Activated CD8-positive, alpha-beta T cell treated with anti-CD3 and anti-CD28 coated beads for 36 hours (primary cell): ENCODE measurements at regions of chr10 and their contacts with region 1.

Region 1: DNA sequence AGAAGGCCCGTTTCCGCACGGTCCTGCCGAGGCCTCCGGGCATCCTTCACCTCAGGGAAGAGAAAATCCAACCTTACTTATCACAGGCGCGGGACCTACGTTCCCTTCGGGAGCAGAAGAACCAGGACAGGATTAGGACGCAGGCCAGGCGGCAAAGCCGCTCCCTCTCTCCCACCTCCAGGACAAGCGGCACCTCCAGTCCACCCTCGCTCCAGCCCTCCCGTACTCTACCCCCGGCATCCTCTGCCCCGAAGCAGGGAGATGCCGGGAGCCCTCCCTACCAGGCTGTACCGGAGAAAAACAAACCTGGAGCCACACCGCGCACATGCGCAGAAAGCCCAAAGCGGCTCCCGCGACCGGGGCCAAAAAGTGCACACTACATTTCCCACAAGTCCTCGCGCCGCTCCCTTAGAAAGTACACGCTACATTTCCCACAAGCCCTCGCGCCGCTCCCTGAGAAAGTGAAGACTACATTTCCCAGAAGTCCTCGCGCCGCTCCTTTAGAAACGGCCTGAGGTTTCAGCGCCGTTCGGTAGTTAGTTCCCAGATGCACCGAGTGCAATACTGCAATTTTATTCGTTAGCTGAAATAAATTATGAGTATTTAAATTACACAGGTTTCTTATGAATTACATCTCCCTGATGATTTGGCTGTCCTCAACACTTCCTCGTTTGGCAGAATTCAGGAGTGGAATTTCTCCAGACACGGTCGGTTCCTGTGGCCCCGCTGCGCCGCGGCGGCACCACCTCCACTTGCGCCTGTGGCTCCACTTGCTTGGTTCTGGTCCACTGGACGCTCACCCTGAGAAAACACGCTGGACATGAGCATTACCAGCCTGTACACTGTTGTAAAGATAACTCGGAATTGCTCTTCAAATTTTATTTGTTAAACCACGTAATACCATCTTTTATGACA is 85.6 kb downstream of the ZNF33B start:
- DNase-seq: peak; percentile 98
- ATAC-seq: peak; percentile 96
- H3K4me3 Mint-ChIP-seq: peak overlapping the region; percentile 91
- H3K27ac Mint-ChIP-seq: peak overlapping the region; percentile 94
- H3K4me1 Mint-ChIP-seq: peaks cover 35% of the 10 kb centered on the region
- H3K27me3 Mint-ChIP-seq: no peaks in the 10 kb centered on the region
- CTCF ChIP-seq: no peak

Region 2: DNA sequence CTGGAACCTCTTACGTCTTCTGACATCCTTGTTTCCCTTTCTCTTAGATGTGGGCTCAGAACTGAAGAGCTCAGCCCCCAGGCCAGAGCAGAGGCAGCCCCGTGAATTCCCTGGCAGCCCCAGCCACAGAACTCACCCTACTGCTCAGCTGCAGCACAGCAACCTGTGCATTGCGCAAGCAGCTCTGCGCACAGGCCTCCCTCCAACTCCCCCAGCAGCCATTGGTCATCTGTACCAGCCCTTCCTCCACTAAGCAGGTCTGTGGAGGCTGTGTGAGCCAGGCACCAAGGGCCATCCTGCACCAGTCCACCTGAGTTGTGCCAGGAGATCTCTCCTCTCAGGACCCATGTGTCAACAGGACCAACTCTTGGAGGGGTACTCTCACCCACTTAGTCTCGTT is 31.1 kb after region 1 on chr10:
- CTCF ChIA-PET with region 1: no interaction called
- POLR2A ChIA-PET with region 1: no interaction called
- intact Hi-C with region 1: no loop called
- DNase-seq: no peak
- ATAC-seq: no peak
- H3K4me3 Mint-ChIP-seq: no peak overlapping the region
- H3K27ac Mint-ChIP-seq: no peak overlapping the region
- H3K4me1 Mint-ChIP-seq: no peaks in the 10 kb centered on the region
- H3K27me3 Mint-ChIP-seq: no peaks in the 10 kb centered on the region
- CTCF ChIP-seq: no peak

Region 3: GRCh38 chr10:42638055-42638820 is 85.5 kb after region 1 on chr10 and contains the start of gene ZNF33B:
- CTCF ChIA-PET with region 1: no interaction called
- POLR2A ChIA-PET with region 1: no interaction called
- intact Hi-C with region 1: loop called (anchors 5 kb)
- DNase-seq: peak; percentile 95
- ATAC-seq: peak; percentile 97
- H3K4me3 Mint-ChIP-seq: peak within 1 kb of the TSS; percentile 95
- H3K27ac Mint-ChIP-seq: peak within 1 kb of the TSS; percentile 98
- H3K4me1 Mint-ChIP-seq: peaks cover 23% of the 10 kb centered on the region
- H3K27me3 Mint-ChIP-seq: no peaks in the 10 kb centered on the region
- CTCF ChIP-seq: no peak
- total RNA-seq, gene ZNF33B: 5.8 to 7.9 TPM